Calu3 (cell line): ENCODE measurements at regions of chr10 and their contacts with region 1.

Region 1: GRCh38 chr10:63720072-63720537 is 198.9 kb downstream of the REEP3 start:
- DNase-seq: peak; percentile 68
- H3K4me3 Mint-ChIP-seq: no peak overlapping the region
- H3K27ac Mint-ChIP-seq: no peak overlapping the region
- H3K4me1 Mint-ChIP-seq: peaks cover 29% of the 10 kb centered on the region
- H3K27me3 Mint-ChIP-seq: peaks cover 2% of the 10 kb centered on the region
- CTCF ChIP-seq: peak; percentile 94

Region 2: GRCh38 chr10:63166742-63167258 is 553.3 kb before region 1 on chr10:
- CTCF ChIA-PET with region 1: interaction called, 61 read pairs
- intact Hi-C with region 1: loop called (anchors 1 kb)
- DNase-seq: peak; percentile 60
- H3K4me3 Mint-ChIP-seq: no peak overlapping the region
- H3K27ac Mint-ChIP-seq: no peak overlapping the region
- H3K4me1 Mint-ChIP-seq: no peaks in the 10 kb centered on the region
- H3K27me3 Mint-ChIP-seq: no peaks in the 10 kb centered on the region
- CTCF ChIP-seq: peak; percentile 55

Region 3: GRCh38 chr10:63217120-63217605 is 502.9 kb before region 1 on chr10:
- CTCF ChIA-PET with region 1: interaction called, 8 read pairs
- intact Hi-C with region 1: loop called (anchors 1 kb)
- DNase-seq: peak; percentile 31
- H3K4me3 Mint-ChIP-seq: no peak overlapping the region
- H3K27ac Mint-ChIP-seq: no peak overlapping the region
- H3K4me1 Mint-ChIP-seq: peaks cover 53% of the 10 kb centered on the region
- H3K27me3 Mint-ChIP-seq: no peaks in the 10 kb centered on the region
- CTCF ChIP-seq: peak; percentile 49

Region 4: DNA sequence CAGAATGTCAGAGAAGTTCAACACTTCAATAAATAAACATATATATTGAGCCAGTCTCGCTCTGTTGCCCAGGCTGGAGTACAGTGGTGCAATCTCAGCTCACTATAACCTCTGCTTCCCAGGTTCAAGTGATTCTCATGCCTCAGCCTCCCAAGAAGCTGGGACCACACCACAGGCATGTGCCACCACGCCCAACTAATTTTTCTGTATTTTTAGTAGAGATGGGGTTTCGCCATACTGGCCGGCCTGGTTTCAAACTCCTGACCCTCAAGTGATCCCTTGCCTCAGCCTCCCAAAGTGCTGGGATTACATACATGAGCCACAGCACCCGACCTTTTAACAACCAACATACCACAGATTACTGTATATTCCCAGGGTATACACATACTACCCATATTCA is 388.5 kb before region 1 on chr10:
- CTCF ChIA-PET with region 1: no interaction called
- intact Hi-C with region 1: loop called (anchors 5 kb)
- DNase-seq: no peak
- H3K4me3 Mint-ChIP-seq: no peak overlapping the region
- H3K27ac Mint-ChIP-seq: no peak overlapping the region
- H3K4me1 Mint-ChIP-seq: no peaks in the 10 kb centered on the region
- H3K27me3 Mint-ChIP-seq: no peaks in the 10 kb centered on the region
- CTCF ChIP-seq: no peak

Region 5: DNA sequence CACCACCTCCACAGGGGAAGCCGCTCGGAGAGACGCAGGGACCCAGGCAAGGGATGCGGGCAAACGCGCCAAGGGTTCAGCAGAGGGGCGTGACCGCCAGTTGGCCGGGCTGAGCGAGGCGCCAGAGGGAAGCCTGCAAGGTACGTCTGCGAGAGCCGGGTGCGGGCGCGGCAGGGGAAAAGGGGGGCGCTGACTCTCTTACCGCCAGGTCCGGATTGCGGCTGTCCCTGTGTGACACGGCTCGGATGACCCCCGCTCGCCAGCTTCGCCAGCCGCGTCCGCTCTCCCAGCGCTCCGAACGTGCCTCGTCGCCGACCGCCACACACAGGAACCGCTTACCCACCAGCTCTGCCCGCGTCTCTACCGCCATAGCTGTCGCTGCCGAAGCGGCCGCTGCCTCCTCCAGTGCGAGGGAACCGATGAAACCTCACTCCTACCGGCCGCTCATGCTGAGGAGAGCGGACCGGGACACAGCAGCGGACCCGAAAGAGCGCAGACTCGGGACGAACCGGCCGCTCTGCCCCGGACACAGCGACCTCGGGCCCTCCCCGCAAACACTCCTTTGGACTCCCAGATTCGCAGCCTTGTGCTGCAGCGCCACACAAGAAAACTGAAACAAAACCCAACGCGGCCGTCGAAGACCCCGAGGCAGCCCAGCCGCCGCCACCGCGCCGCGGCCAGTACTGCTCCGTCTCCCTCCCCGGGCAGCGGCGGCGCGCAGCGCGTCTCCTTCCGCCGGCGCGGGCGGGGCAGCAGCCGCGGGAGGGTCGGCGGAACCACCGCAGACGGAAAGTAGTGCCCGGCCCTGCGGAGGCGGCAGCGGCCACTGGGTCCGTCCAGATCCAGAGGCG is 254.6 kb before region 1 on chr10 and contains the start of gene JMJD1C:
- CTCF ChIA-PET with region 1: interaction called, 3 read pairs
- intact Hi-C with region 1: loop called (anchors 5 kb)
- DNase-seq: peak; percentile 92
- H3K4me3 Mint-ChIP-seq: peak within 1 kb of the TSS; percentile 99
- H3K27ac Mint-ChIP-seq: peak within 1 kb of the TSS; percentile 92
- H3K4me1 Mint-ChIP-seq: peaks cover 32% of the 10 kb centered on the region
- H3K27me3 Mint-ChIP-seq: no peaks in the 10 kb centered on the region
- CTCF ChIP-seq: no peak
- total RNA-seq, gene JMJD1C: 67.6 and 73.1 TPM in 2 replicates

Region 6: DNA sequence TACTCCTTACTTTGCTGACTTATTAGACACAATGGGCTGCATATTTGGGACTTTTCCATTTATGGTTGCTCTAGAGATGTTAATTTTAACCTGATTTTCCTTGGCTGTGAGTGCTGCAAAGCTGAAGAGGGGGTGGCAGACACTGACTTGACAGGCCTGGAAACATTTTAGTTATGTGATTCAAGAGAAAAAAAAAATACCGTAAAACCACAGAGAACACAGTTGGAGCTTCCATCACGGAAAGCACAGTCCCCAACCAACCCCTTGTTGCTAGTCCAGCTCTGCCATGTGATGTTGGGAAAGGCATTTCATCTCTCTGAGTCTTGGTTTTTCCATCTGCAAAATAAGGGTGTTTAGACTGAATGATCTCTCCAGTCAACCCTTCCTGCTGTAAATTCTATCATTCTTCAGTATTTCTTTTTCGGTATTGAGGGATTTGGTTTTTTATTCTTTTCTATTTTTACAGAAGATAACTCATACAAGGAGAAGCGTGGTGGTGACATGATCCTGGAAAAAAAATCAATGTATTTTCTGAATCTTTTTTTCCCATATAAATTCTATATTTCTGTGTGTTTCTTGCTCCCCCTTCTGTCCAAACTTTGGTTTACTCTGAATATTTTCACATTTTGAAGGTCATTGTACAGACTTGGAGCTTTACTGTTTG is 47.2 kb after region 1 on chr10:
- CTCF ChIA-PET with region 1: interaction called, 15 read pairs
- intact Hi-C with region 1: loop called (anchors 1 kb)
- DNase-seq: no peak
- H3K4me3 Mint-ChIP-seq: no peak overlapping the region
- H3K27ac Mint-ChIP-seq: no peak overlapping the region
- H3K4me1 Mint-ChIP-seq: peaks cover 8% of the 10 kb centered on the region
- H3K27me3 Mint-ChIP-seq: no peaks in the 10 kb centered on the region
- CTCF ChIP-seq: peak; percentile 60

Region 7: DNA sequence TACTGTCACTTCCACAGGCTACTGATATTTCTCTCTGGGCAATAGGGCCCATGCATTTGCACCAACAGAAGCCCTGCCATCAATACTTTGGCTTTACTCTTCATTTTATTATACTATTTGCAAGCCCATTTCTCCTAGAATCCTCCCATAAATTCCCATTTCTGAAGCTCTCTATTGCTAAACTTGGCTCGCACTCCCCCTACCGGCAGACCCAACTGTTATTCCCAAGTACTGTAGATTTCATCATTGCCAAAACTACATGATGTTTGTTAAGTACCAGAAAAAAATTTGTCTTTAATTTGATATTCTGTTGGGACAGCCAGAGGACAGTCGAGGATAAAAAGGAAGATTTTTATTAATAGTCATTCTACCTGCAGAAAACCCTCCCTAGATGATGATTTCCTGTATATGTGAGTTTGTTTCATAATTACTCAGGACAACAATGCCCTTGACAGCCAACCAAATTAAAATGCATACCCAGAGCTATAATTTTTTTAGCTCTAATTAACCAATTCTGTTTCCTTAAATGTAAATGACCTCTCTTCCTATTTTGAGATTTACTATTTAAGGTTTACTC is 99.7 kb after region 1 on chr10:
- CTCF ChIA-PET with region 1: interaction called, 13 read pairs
- intact Hi-C with region 1: loop called (anchors 5 kb)
- DNase-seq: peak; percentile 84
- H3K4me3 Mint-ChIP-seq: no peak overlapping the region
- H3K27ac Mint-ChIP-seq: no peak overlapping the region
- H3K4me1 Mint-ChIP-seq: no peaks in the 10 kb centered on the region
- H3K27me3 Mint-ChIP-seq: peaks cover 41% of the 10 kb centered on the region
- CTCF ChIP-seq: peak; percentile 88